ENCODE measurements at regions of chr6 and their contacts with region 1.

Region 1: GRCh38 chr6:28355743-28356665 is 6.3 kb downstream of the ZKSCAN3 start:
- DNase-seq: peak; percentile 80 to 90 (median 87)
- ATAC-seq: peak; percentile 92
- H3K4me3 ChIP-seq: peak overlapping the region in 1 of 2 donors; percentile 31
- H3K27ac ChIP-seq: peak overlapping the region; percentile 84 to 94 (median 88)
- H3K4me1 ChIP-seq: peaks cover 31% of the 10 kb centered on the region
- H3K27me3 ChIP-seq: no peaks in the 10 kb centered on the region
- CTCF ChIP-seq: peak; percentile 76 to 96 (median 93)
- POLR2A ChIP-seq: peak in 2 of 3 donors; percentile 47 to 64

Region 2: GRCh38 chr6:28136585-28137504 is 219.2 kb before region 1 on chr6:
- intact Hi-C with region 1: loop called (anchors 10 kb)
- DNase-seq: peak; percentile 88 to 95 (median 92)
- ATAC-seq: peak; percentile 88
- H3K4me3 ChIP-seq: peak overlapping the region; percentile 51 to 91
- H3K27ac ChIP-seq: peak overlapping the region; percentile 55 to 86 (median 78)
- H3K4me1 ChIP-seq: peaks cover 17% of the 10 kb centered on the region
- H3K27me3 ChIP-seq: no peaks in the 10 kb centered on the region
- CTCF ChIP-seq: no peak
- POLR2A ChIP-seq: peak in 2 of 3 donors; percentile 40 to 46

Measured in body of pancreas (tissue), 4 donors.